ENCODE measurements at regions of chr18 and their contacts with region 1.

Region 1: GRCh38 chr18:62131301-62131909 is 55.5 kb downstream of the PIGN start:
- DNase-seq: peak; percentile 39
- H3K4me3 ChIP-seq: no peak overlapping the region
- H3K27ac ChIP-seq: no peak overlapping the region
- H3K4me1 ChIP-seq: no peaks in the 10 kb centered on the region
- H3K27me3 ChIP-seq: no peaks in the 10 kb centered on the region
- CTCF ChIP-seq: peak; percentile 52 to 88 (median 85)
- POLR2A ChIP-seq: no peak

Region 2: DNA sequence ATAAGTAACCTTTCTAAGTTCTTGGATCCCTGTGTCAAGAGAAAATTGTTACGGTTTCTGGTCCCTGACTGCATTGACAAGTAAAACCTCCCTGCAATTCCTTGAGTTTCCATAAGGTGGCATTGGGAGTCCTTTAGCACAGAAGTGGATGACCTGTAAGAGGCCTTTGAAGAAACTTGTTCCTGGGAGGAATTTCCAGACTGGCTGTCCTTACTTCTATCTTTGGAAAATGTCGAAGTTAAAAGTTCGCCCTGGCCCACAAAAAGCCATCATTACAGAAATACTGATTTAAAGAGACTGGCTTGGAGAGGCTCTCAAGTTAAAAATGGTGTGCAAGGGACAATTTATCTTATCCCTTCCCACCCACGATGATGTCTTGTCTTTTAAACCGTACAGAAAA is 579.8 kb before region 1 on chr18:
- intact Hi-C with region 1: loop called (anchors 5 kb)
- DNase-seq: peak; percentile 77
- H3K4me3 ChIP-seq: no peak overlapping the region
- H3K27ac ChIP-seq: no peak overlapping the region
- H3K4me1 ChIP-seq: no peaks in the 10 kb centered on the region
- H3K27me3 ChIP-seq: no peaks in the 10 kb centered on the region
- CTCF ChIP-seq: peak; percentile 50 to 87 (median 72)
- POLR2A ChIP-seq: no peak

Region 3: DNA sequence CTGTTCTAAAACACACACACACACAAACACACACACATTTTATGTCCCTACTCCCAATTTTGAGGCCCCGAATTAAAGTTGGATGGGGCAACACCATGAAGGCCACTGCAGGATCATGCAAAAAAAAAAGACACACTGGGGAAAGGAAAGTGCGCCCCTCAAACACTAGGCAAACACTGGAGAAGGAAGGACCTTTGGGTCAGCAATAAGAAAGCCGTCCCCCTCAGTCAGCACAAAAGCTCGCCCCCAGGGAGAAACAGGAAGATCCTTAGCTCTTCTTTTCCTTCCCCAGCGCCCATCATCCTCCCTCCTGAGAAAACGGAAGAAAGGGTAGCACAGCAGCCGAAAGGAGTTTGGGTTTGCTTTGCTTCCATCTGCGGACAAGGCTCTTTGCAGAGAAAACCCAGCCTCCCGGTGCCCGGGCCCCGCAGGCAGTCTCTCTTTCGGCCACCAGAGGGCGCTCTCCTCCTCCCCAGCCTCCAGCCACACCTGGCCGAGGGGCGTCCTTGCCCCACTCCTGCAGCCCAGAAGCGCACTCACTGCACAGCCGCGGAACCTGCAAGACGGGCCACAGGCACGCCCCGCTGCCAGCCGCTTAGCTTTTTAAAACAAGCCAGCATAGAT is 549.7 kb before region 1 on chr18:
- intact Hi-C with region 1: loop called (anchors 2 kb)
- DNase-seq: peak; percentile 77
- H3K4me3 ChIP-seq: peak overlapping the region; percentile 23 to 25
- H3K27ac ChIP-seq: peak overlapping the region; percentile 48 to 50
- H3K4me1 ChIP-seq: no peaks in the 10 kb centered on the region
- H3K27me3 ChIP-seq: no peaks in the 10 kb centered on the region
- CTCF ChIP-seq: peak; percentile 95 to 99 (median 97)
- POLR2A ChIP-seq: no peak

Region 4: GRCh38 chr18:61635901-61636528 is 495.4 kb before region 1 on chr18:
- intact Hi-C with region 1: loop called (anchors 10 kb)
- DNase-seq: peak; percentile 84
- H3K4me3 ChIP-seq: no peak overlapping the region
- H3K27ac ChIP-seq: peak overlapping the region; percentile 56 to 76
- H3K4me1 ChIP-seq: peaks cover 9% of the 10 kb centered on the region
- H3K27me3 ChIP-seq: no peaks in the 10 kb centered on the region
- CTCF ChIP-seq: peak; percentile 49 to 79 (median 74)
- POLR2A ChIP-seq: peak; percentile 15

Region 5: GRCh38 chr18:61893971-61894750 is 237.2 kb before region 1 on chr18:
- intact Hi-C with region 1: loop called (anchors 5 kb)
- DNase-seq: peak; percentile 91
- H3K4me3 ChIP-seq: peak overlapping the region; percentile 85 to 95
- H3K27ac ChIP-seq: peak overlapping the region; percentile 81 to 85
- H3K4me1 ChIP-seq: no peaks in the 10 kb centered on the region
- H3K27me3 ChIP-seq: no peaks in the 10 kb centered on the region
- CTCF ChIP-seq: peak in 3 of 4 experiments; percentile 8 to 74 (median 71)
- POLR2A ChIP-seq: peak; percentile 77

Region 6: GRCh38 chr18:62236252-62236651 is 104.8 kb after region 1 on chr18:
- intact Hi-C with region 1: no loop called
- DNase-seq: no peak
- H3K4me3 ChIP-seq: no peak overlapping the region
- H3K27ac ChIP-seq: no peak overlapping the region
- H3K4me1 ChIP-seq: no peaks in the 10 kb centered on the region
- H3K27me3 ChIP-seq: no peaks in the 10 kb centered on the region
- CTCF ChIP-seq: no peak
- POLR2A ChIP-seq: no peak

Region 7: GRCh38 chr18:62420513-62421209 is 289.3 kb after region 1 on chr18:
- intact Hi-C with region 1: no loop called
- DNase-seq: peak; percentile 41
- H3K4me3 ChIP-seq: peak overlapping the region in 1 of 2 donors; percentile 15
- H3K27ac ChIP-seq: peak overlapping the region; percentile 47 to 62
- H3K4me1 ChIP-seq: no peaks in the 10 kb centered on the region
- H3K27me3 ChIP-seq: no peaks in the 10 kb centered on the region
- CTCF ChIP-seq: no peak
- POLR2A ChIP-seq: no peak